Posterior vena cava (tissue), 2 donors: ENCODE measurements at regions of chr1 and their contacts with region 1.

Region 1: GRCh38 chr1:97119260-97120158 is 397.9 kb downstream of the PTBP2 start:
- DNase-seq: no peak

Region 2: DNA sequence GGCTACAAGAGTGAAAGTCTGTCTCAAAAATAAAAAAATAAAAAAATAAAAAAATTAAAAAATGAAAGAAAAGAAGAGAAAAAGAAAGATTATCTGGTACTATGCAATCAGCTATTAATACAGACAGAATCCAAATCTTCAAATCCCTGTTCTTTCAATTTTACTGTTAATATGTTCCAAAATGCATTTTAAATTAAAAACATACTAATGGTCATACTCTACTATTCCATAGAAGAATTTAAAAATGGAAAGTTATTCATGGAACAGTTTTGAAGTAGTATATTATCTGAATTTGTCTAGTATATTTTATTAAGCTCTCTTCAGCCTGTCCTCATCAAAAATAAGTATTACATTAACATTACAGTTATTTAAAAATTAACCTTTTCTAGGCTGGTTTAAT is 32.1 kb after region 1 on chr1:
- intact Hi-C with region 1: loop called in 1 of 2 experiments (anchors 2 kb)
- DNase-seq: no peak